Activated T-helper 1 cell treated with anti-CD3 and anti-CD28 coated beads, Interleukin-12 subunit alpha, Interleukin-12 subunit beta, Interleukin-2, Interleukin-4 antibody, amounts not matched to agents 30 ng/mL and 10 ng/mL and 1 ng/mL, durations not matched to agents 14 hours and 24 hours and 36 hours (primary cell): ENCODE measurements at regions of chr1 and their contacts with region 1.

Region 1: DNA sequence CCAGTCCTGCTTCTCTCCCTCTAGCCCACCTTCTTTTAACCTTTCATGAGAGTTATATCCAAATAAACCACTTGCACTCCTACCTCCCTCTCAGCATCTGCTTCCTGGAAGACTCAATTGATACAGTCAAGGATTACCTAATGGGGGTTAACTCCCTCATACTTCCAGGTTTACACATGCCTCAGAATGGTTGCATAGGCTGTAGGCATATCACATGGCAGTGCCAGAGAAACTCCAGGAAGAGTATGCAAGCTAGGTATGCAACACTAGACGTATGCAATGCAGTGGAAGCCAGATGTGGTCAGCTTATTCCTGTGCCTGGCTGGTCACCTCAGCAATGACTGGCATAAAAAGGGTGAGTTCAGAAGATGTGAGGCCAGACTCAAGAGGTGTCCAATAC is 32.7 kb upstream of the VANGL1 start:
- DNase-seq: no peak
- H3K4me3 Mint-ChIP-seq: no peak overlapping the region
- H3K27ac Mint-ChIP-seq: no peak overlapping the region
- H3K4me1 Mint-ChIP-seq: no peaks in the 10 kb centered on the region
- H3K27me3 Mint-ChIP-seq: peaks cover 14% of the 10 kb centered on the region

Region 2: GRCh38 chr1:115648717-115649691 is 40.0 kb after region 1 on chr1:
- intact Hi-C with region 1: loop called (anchors 5 kb)
- DNase-seq: peak; percentile 36
- H3K4me3 Mint-ChIP-seq: no peak overlapping the region
- H3K27ac Mint-ChIP-seq: no peak overlapping the region
- H3K4me1 Mint-ChIP-seq: peaks cover 6% of the 10 kb centered on the region
- H3K27me3 Mint-ChIP-seq: peaks cover 6% of the 10 kb centered on the region

Region 3: DNA sequence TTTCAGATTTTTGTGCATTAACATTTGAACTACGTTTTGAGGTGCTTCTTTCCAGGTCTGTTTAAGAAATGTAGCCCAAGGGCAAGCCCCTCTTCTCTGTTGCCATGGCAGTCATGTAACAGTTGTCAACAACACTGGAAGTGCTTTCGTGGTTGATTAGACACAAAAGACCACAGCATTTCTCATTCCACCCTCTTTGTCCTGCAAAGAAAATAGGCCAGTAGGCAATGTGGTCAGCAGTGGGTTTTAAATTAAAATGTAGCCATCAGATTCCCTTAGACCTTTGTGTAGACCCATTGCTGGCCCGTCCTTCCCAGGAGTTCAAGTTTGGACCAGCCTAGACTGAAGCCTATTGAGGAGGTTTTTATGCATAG is 68.1 kb after region 1 on chr1:
- intact Hi-C with region 1: loop called (anchors 2 kb)
- DNase-seq: no peak
- H3K4me3 Mint-ChIP-seq: no peak overlapping the region
- H3K27ac Mint-ChIP-seq: no peak overlapping the region
- H3K4me1 Mint-ChIP-seq: no peaks in the 10 kb centered on the region
- H3K27me3 Mint-ChIP-seq: no peaks in the 10 kb centered on the region

Region 4: DNA sequence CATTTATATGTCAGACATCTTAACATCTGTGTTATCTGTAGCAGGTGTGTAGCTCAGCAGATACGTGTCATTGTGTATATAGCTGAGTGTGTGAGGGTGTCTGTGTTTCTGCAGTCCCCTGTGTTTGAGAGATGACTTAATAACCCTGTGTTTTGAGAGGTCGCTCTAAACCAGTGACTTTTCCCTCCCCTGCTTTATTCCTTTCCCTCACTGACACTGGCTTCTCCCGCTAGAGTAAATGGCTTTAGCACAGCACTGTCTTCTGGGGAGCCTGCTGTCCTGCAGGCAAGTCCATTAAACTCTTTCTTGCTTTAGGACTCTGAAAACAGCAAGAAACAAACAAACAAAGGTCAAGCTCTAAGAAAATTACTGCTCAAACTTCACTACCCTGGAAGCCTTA is 85.8 kb after region 1 on chr1:
- intact Hi-C with region 1: no loop called
- DNase-seq: no peak
- H3K4me3 Mint-ChIP-seq: no peak overlapping the region
- H3K27ac Mint-ChIP-seq: no peak overlapping the region
- H3K4me1 Mint-ChIP-seq: no peaks in the 10 kb centered on the region
- H3K27me3 Mint-ChIP-seq: peaks cover 9% of the 10 kb centered on the region

Region 5: GRCh38 chr1:115706587-115707425 is 97.8 kb after region 1 on chr1:
- intact Hi-C with region 1: loop called (anchors 1 kb)
- DNase-seq: no peak
- H3K4me3 Mint-ChIP-seq: no peak overlapping the region
- H3K27ac Mint-ChIP-seq: no peak overlapping the region
- H3K4me1 Mint-ChIP-seq: no peaks in the 10 kb centered on the region
- H3K27me3 Mint-ChIP-seq: peaks cover 28% of the 10 kb centered on the region

Region 6: GRCh38 chr1:115761601-115762302 is 152.7 kb after region 1 on chr1:
- intact Hi-C with region 1: no loop called
- DNase-seq: no peak
- H3K4me3 Mint-ChIP-seq: no peak overlapping the region
- H3K27ac Mint-ChIP-seq: no peak overlapping the region
- H3K4me1 Mint-ChIP-seq: no peaks in the 10 kb centered on the region
- H3K27me3 Mint-ChIP-seq: peaks cover 4% of the 10 kb centered on the region

Region 7: GRCh38 chr1:115771847-115772457 is 162.9 kb after region 1 on chr1:
- intact Hi-C with region 1: loop called (anchors 1 kb)
- DNase-seq: no peak
- H3K4me3 Mint-ChIP-seq: no peak overlapping the region
- H3K27ac Mint-ChIP-seq: no peak overlapping the region
- H3K4me1 Mint-ChIP-seq: no peaks in the 10 kb centered on the region
- H3K27me3 Mint-ChIP-seq: peaks cover 8% of the 10 kb centered on the region

Region 8: GRCh38 chr1:115976062-115976920 is 367.3 kb after region 1 on chr1 and contains the start of gene SLC22A15:
- intact Hi-C with region 1: loop called (anchors 2 kb)
- DNase-seq: peak; percentile 30
- H3K4me3 Mint-ChIP-seq: peak within 1 kb of the TSS; percentile 86
- H3K27ac Mint-ChIP-seq: peak within 1 kb of the TSS; percentile 48
- H3K4me1 Mint-ChIP-seq: peaks cover 4% of the 10 kb centered on the region
- H3K27me3 Mint-ChIP-seq: peaks cover 54% of the 10 kb centered on the region
- total RNA-seq, gene SLC22A15: 0.23 and 0.73 TPM in 2 replicates